GM12878 (cell line): ENCODE measurements at regions of chr1 and their contacts with region 1.

Region 1: DNA sequence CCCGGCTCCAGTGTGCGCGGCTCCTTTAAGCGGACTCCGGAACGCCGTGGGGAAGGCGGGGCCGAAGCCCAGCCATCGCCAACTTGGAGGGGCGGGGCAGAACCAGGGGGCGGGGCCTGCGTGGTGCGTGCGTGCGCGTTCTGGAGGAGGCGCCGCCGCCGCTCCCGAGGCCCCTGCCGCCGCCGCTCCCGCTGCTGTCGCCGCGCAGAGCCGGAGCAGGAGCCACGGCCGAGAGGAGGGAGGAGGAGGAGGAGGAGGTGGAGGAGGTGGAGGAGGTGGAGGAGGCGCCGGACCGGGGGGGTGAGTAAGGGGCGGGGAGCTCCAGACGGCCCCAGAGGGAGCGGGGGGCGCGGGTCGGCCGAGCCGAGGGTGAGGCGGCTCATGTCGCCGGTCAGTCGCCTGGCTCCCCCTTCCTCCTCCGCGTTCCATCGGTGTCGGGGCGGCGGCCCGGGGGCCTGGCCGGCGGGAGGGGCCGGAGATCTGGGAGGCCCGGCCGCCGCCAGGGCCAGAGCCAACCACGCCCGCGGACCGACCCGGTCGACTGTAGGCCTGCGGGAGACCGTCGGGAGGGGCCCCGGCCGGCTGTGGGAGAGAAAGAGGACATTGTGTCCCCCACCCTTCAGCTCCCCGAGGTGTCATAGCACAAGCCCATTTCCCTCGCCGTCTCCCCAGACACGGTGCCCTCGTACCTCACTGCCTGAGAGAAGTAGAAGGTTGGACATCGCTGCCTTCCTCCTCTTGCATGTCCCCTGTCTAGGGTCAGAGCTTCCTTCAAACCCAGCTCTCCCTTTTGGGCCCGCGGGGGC is at the start of gene RAP1A:
- DNase-seq: peak; percentile 55
- ATAC-seq: peak; percentile 64
- H3K4me3 ChIP-seq: peak within 1 kb of the TSS; percentile 87
- H3K27ac ChIP-seq: peak within 1 kb of the TSS; percentile 94
- H3K4me1 ChIP-seq: peaks cover 34% of the 10 kb centered on the region
- H3K27me3 ChIP-seq: no peaks in the 10 kb centered on the region
- CTCF ChIP-seq: no peak
- EP300 ChIP-seq: no peak
- POLR2A ChIP-seq: peak; percentile 84
- RAD21 ChIP-seq: no peak
- polyA plus RNA-seq, gene RAP1A: 71.8 to 93.7 TPM

Region 2: DNA sequence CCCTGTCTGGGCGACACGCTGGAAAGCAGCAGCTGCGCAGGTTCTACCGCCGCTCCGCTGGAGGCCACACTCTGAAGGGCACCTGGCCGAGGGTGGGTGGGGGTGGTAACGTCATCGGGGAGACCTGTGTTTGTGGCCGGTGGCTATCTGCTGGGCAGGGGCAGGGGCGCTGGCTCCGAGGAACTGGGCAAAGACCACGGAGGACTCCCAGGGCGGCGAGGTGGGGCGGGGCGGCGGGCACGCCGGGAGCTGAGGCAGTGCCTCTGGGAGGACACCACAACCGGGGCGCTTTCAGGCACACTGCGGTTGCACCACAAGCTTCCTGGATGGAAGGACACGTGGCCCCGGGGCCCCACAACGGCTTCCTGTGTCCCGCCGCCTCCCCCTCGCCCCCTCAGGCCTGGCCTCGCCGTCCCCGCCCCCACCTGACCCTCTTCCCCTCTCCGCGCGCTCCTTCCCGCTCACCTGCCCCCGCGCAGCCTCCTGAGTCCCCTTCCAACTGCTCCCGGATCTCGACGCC is 416.1 kb before region 1 on chr1:
- CTCF ChIA-PET with region 1: no interaction called
- POLR2A ChIA-PET with region 1: no interaction called
- RAD21 ChIA-PET with region 1: no interaction called
- SMC1A ChIA-PET with region 1: interaction called, 3 read pairs
- in situ Hi-C with region 1: no loop called
- intact Hi-C with region 1: loop called (anchors 5 kb)
- DNase-seq: peak; percentile 77
- ATAC-seq: peak; percentile 57
- H3K4me3 ChIP-seq: peak overlapping the region; percentile 87
- H3K27ac ChIP-seq: peak overlapping the region; percentile 92
- H3K4me1 ChIP-seq: peaks cover 39% of the 10 kb centered on the region
- H3K27me3 ChIP-seq: no peaks in the 10 kb centered on the region
- CTCF ChIP-seq: no peak
- EP300 ChIP-seq: peak; percentile 30 to 69; a peak in 3 of 4 replicates
- POLR2A ChIP-seq: peak; percentile 72; the same call in 1 of the 2 replicates
- RAD21 ChIP-seq: 0 out of 2 replicates have a peak, but pooled peaks have one; percentile 2

Region 3: GRCh38 chr1:111275079-111275478 is 344.8 kb before region 1 on chr1:
- CTCF ChIA-PET with region 1: no interaction called
- POLR2A ChIA-PET with region 1: no interaction called
- RAD21 ChIA-PET with region 1: no interaction called
- SMC1A ChIA-PET with region 1: no interaction called
- in situ Hi-C with region 1: no loop called
- intact Hi-C with region 1: no loop called
- DNase-seq: no peak
- ATAC-seq: peak; percentile 18; the same call in 1 of the 3 replicates
- H3K4me3 ChIP-seq: no peak overlapping the region
- H3K27ac ChIP-seq: 0 out of 2 replicates have a peak overlapping the region, but pooled peaks have one; percentile 20
- H3K4me1 ChIP-seq: peaks cover 4% of the 10 kb centered on the region
- H3K27me3 ChIP-seq: peaks cover 0 to 1% of the 10 kb centered on the region in 2 experiments; a peak in 2 of 4 replicates
- CTCF ChIP-seq: no peak
- EP300 ChIP-seq: no peak
- POLR2A ChIP-seq: no peak
- RAD21 ChIP-seq: no peak

Region 4: GRCh38 chr1:111378791-111379190 is 241.0 kb before region 1 on chr1:
- CTCF ChIA-PET with region 1: no interaction called
- POLR2A ChIA-PET with region 1: no interaction called
- RAD21 ChIA-PET with region 1: no interaction called
- SMC1A ChIA-PET with region 1: no interaction called
- in situ Hi-C with region 1: no loop called
- intact Hi-C with region 1: no loop called
- DNase-seq: no peak
- ATAC-seq: no peak
- H3K4me3 ChIP-seq: no peak overlapping the region
- H3K27ac ChIP-seq: no peak overlapping the region
- H3K4me1 ChIP-seq: no peaks in the 10 kb centered on the region
- H3K27me3 ChIP-seq: no peaks in the 10 kb centered on the region; a peak in 2 of 4 replicates
- CTCF ChIP-seq: no peak
- EP300 ChIP-seq: no peak
- POLR2A ChIP-seq: no peak
- RAD21 ChIP-seq: no peak

Region 5: DNA sequence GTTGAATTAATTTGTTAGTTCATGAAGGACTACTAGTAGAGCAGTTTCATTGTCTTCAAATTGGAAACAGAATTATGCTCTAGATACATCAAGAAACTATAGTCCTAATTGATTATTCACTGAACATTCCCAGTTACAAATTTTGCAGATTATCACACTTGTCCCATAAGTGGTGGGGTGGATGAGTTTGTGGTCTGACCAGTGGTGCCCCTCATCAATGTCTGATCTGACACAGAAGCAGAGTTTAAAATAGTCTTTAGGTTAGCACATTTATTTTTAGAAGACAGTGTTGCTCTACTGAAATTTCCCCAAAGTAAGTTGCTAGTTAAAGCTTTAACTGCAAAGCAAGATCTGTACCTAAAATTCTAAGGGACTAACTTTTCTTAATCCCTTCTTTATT is 76.5 kb after region 1 on chr1:
- CTCF ChIA-PET with region 1: no interaction called
- POLR2A ChIA-PET with region 1: interaction called, 8 read pairs
- RAD21 ChIA-PET with region 1: interaction called, 12 read pairs
- SMC1A ChIA-PET with region 1: interaction called, 9 read pairs
- in situ Hi-C with region 1: no loop called
- intact Hi-C with region 1: loop called (anchors 5 kb)
- DNase-seq: peak; percentile 20
- ATAC-seq: peak; percentile 70
- H3K4me3 ChIP-seq: peak overlapping the region; percentile 28; the same call in 1 of the 2 replicates
- H3K27ac ChIP-seq: peak overlapping the region; percentile 35; the same call in 1 of the 2 replicates
- H3K4me1 ChIP-seq: peaks cover 25% of the 10 kb centered on the region
- H3K27me3 ChIP-seq: no peaks in the 10 kb centered on the region
- CTCF ChIP-seq: no peak
- EP300 ChIP-seq: peak; percentile 38 to 64; a peak in 1 of 4 replicates
- POLR2A ChIP-seq: no peak
- RAD21 ChIP-seq: no peak